HCT116 (cell line): ENCODE measurements at regions of chr5 and their contacts with region 1.

Region 1: DNA sequence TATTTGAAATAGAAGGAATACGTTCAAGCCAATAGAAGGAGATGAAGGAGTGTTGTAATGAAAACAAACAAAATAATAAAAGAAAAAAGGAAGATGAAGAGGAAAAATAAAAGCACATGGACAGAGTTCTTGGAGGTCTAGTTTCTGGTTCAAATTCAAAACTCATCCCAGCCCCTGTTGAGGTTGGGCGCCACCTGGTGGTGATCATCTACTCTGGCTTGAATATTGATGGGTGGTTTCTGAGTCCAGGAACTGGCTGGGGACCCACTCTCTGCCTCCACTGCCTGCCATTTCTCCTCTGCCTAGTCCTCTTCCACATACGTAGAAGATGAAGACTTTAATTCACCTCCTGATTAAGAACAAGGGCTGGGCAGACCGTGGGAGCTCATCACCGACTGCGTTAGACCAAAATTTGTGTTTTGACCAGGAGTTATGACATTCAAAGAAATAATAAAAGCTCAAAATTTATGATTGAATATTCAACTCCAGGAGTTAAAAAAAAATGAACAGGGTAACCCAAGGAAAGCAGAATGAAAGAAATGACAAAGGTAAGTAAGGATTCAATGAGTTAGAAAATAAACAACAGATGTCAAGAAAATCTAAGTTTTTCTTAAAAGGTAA is 99.0 kb upstream of the SLC1A3 start:
- DNase-seq: peak; percentile 48
- ATAC-seq: peak; percentile 81
- H3K4me3 ChIP-seq: no peak overlapping the region
- H3K27ac ChIP-seq: no peak overlapping the region
- H3K4me1 ChIP-seq: peaks cover 0 to 5% of the 10 kb centered on the region in 2 experiments; a peak in 2 of 4 replicates
- H3K27me3 ChIP-seq: no peaks in the 10 kb centered on the region
- CTCF ChIP-seq: peak; percentile 63 to 87 (median 84); a peak in 5 of 6 replicates
- POLR2A ChIP-seq: no peak
- RAD21 ChIP-seq: peak; percentile 76

Region 2: DNA sequence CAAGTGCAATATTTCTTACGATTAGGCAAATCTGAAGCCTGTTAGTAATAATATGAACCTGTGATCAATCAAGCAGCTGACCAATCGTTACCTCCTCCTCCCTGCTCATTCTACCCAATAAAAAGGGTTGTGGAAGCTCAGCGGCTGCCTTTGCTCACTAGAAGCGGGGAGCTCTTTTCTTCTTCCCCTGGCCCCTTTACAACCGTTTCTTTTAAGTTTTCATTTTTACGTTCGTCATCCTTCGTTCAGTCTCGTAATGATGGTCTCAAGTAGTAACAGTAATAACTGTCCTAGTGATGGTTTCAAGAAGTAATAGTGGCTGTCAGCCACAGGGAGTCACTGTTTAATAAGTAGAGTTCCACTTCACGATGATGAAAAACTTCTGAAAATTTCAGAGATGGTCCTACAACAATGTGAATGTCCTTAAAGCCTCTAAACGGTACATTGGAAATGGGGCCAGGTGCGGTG is 447.0 kb before region 1 on chr5:
- CTCF ChIA-PET with region 1: no interaction called
- POLR2A ChIA-PET with region 1: no interaction called
- RAD21 ChIA-PET with region 1: no interaction called
- intact Hi-C with region 1: loop called (anchors 5 kb)
- DNase-seq: peak; percentile 16
- ATAC-seq: peak; percentile 75
- H3K4me3 ChIP-seq: no peak overlapping the region
- H3K27ac ChIP-seq: no peak overlapping the region
- H3K4me1 ChIP-seq: no peaks in the 10 kb centered on the region
- H3K27me3 ChIP-seq: peaks cover 20% of the 10 kb centered on the region
- CTCF ChIP-seq: peak; percentile 16 to 60 (median 33); a peak in 3 of 6 replicates
- POLR2A ChIP-seq: no peak
- RAD21 ChIP-seq: peak; percentile 51

Region 3: GRCh38 chr5:36414869-36415282 is 92.6 kb before region 1 on chr5:
- CTCF ChIA-PET with region 1: interaction called, 30 read pairs
- POLR2A ChIA-PET with region 1: interaction called, 3 read pairs
- RAD21 ChIA-PET with region 1: interaction called, 3 to 4 read pairs
- intact Hi-C with region 1: loop called (anchors 1 kb)
- DNase-seq: peak; percentile 37
- ATAC-seq: peak; percentile 73
- H3K4me3 ChIP-seq: no peak overlapping the region
- H3K27ac ChIP-seq: no peak overlapping the region
- H3K4me1 ChIP-seq: peaks cover 0 to 10% of the 10 kb centered on the region in 2 experiments; a peak in 1 of 4 replicates
- H3K27me3 ChIP-seq: no peaks in the 10 kb centered on the region
- CTCF ChIP-seq: peak; percentile 21 to 81 (median 61); a peak in 4 of 6 replicates
- POLR2A ChIP-seq: no peak
- RAD21 ChIP-seq: peak; percentile 81

Region 4: GRCh38 chr5:36552626-36553393 is 45.4 kb after region 1 on chr5:
- CTCF ChIA-PET with region 1: no interaction called
- POLR2A ChIA-PET with region 1: no interaction called
- RAD21 ChIA-PET with region 1: no interaction called
- intact Hi-C with region 1: no loop called
- DNase-seq: no peak
- ATAC-seq: peak; percentile 44; the same call in 1 of the 2 replicates
- H3K4me3 ChIP-seq: no peak overlapping the region
- H3K27ac ChIP-seq: no peak overlapping the region
- H3K4me1 ChIP-seq: peaks cover 0 to 8% of the 10 kb centered on the region in 2 experiments; a peak in 1 of 4 replicates
- H3K27me3 ChIP-seq: no peaks in the 10 kb centered on the region
- CTCF ChIP-seq: no peak
- POLR2A ChIP-seq: no peak
- RAD21 ChIP-seq: no peak

Region 5: DNA sequence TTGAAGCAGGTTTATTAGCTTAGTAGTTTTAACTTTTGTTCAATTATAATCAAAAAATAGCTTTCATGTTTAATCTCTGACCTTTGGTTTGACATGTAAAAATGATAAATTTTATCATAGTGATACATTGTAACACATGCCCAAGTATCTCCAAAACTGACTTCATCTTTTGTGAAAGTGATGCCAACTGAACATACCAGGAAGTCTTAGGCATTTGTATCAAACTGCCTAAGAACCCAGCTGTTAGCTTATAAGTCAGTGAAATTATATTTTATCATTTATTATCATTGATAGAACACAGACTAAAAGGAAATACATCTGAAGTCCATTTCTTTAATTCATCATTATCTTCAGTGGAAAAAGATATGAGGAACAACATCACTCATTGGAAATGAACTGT is 408.2 kb after region 1 on chr5:
- CTCF ChIA-PET with region 1: no interaction called
- POLR2A ChIA-PET with region 1: no interaction called
- RAD21 ChIA-PET with region 1: no interaction called
- intact Hi-C with region 1: no loop called
- DNase-seq: no peak
- ATAC-seq: no peak
- H3K4me3 ChIP-seq: no peak overlapping the region
- H3K27ac ChIP-seq: no peak overlapping the region
- H3K4me1 ChIP-seq: no peaks in the 10 kb centered on the region
- H3K27me3 ChIP-seq: no peaks in the 10 kb centered on the region
- CTCF ChIP-seq: no peak
- POLR2A ChIP-seq: no peak
- RAD21 ChIP-seq: no peak